ENCODE measurements at regions of chr3 and their contacts with region 1.

Region 1: GRCh38 chr3:14216257-14217048 is 37.8 kb downstream of the LSM3 start:
- DNase-seq: peak in 1 of 3 donors; percentile 78
- H3K4me3 ChIP-seq: peak overlapping the region in 1 of 7 experiments; percentile 36
- H3K27ac ChIP-seq: no peak overlapping the region
- H3K4me1 ChIP-seq: no peaks in the 10 kb centered on the region
- H3K27me3 ChIP-seq: no peaks in the 10 kb centered on the region

Region 2: GRCh38 chr3:13559764-13560525 is 656.5 kb before region 1 on chr3:
- CTCF ChIA-PET with region 1: no interaction called
- POLR2A ChIA-PET with region 1: no interaction called
- DNase-seq: no peak
- H3K4me3 ChIP-seq: no peak overlapping the region
- H3K27ac ChIP-seq: no peak overlapping the region
- H3K4me1 ChIP-seq: peaks cover 0 to 46% (median 14%) of the 10 kb centered on the region in 4 experiments
- H3K27me3 ChIP-seq: no peaks in the 10 kb centered on the region

Region 3: GRCh38 chr3:14042680-14043079 is 173.8 kb before region 1 on chr3:
- CTCF ChIA-PET with region 1: no interaction called
- POLR2A ChIA-PET with region 1: no interaction called
- DNase-seq: no peak
- H3K4me3 ChIP-seq: no peak overlapping the region
- H3K27ac ChIP-seq: no peak overlapping the region
- H3K4me1 ChIP-seq: no peaks in the 10 kb centered on the region
- H3K27me3 ChIP-seq: peaks cover 0 to 6% (median 4%) of the 10 kb centered on the region in 5 experiments

Region 4: GRCh38 chr3:14228648-14229470 is 12.4 kb after region 1 on chr3:
- CTCF ChIA-PET with region 1: interaction called, 21 read pairs
- POLR2A ChIA-PET with region 1: no interaction called
- DNase-seq: no peak
- H3K4me3 ChIP-seq: no peak overlapping the region
- H3K27ac ChIP-seq: no peak overlapping the region
- H3K4me1 ChIP-seq: peaks cover 15 to 37% (median 27%) of the 10 kb centered on the region in 4 experiments
- H3K27me3 ChIP-seq: no peaks in the 10 kb centered on the region

Region 5: DNA sequence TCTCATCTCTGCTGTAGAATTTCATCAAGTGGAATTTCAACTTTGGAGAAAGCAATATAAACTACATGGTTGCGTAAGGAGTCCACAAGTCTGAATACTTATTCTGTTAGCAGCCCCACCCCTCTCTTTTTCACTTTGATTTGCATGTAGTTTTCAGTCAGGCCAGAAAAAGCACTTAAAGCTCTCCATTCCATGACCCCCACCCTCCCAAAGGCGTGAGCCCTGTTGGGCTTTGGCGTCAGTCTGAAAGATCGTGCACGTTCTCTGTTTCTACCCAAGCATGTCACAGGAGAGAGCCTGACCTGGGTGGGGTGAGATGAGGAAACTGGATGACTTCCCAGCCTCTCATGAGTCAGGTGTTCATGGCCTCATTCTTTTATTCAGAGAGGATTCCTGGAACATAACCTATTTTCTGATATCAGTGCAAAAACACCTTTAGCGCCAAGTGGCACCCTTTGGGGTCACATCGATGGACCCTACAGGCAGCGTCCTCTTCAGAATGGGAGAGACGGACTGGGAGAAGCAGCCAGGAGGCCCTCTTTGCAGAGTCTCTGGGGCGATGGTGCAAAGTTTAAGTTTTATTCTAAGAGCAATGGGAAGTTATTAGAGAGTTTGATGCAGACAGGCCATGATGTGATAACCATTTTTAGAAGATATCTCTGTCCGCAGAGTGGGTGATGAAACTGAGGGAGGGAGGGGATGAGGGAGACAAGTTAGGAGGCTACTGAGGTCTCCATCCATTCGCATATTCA is 18.0 kb after region 1 on chr3:
- CTCF ChIA-PET with region 1: interaction called, 21 read pairs
- POLR2A ChIA-PET with region 1: no interaction called
- DNase-seq: no peak
- H3K4me3 ChIP-seq: no peak overlapping the region
- H3K27ac ChIP-seq: no peak overlapping the region
- H3K4me1 ChIP-seq: peaks cover 15 to 52% (median 40%) of the 10 kb centered on the region in 4 experiments
- H3K27me3 ChIP-seq: no peaks in the 10 kb centered on the region